ENCODE measurements at regions of chr20 and their contacts with region 1.

Region 1: GRCh38 chr20:35092524-35093266 is at the start of gene TRPC4AP:
- DNase-seq: peak; percentile 78 to 87
- ATAC-seq: peak; percentile 91 to 92
- H3K4me3 ChIP-seq: peak within 1 kb of the TSS; percentile 71 to 95 (median 80)
- H3K27ac ChIP-seq: peak within 1 kb of the TSS; percentile 87 to 99 (median 94)
- H3K4me1 ChIP-seq: peaks cover 36 to 41% of the 10 kb centered on the region in 2 donors
- H3K27me3 ChIP-seq: no peaks in the 10 kb centered on the region
- CTCF ChIP-seq: peak; percentile 94 to 99 (median 99)
- POLR2A ChIP-seq: peak; percentile 86 to 91
- total RNA-seq, gene TRPC4AP: 58.4 to 67.4 (median 63.5) TPM

Region 2: DNA sequence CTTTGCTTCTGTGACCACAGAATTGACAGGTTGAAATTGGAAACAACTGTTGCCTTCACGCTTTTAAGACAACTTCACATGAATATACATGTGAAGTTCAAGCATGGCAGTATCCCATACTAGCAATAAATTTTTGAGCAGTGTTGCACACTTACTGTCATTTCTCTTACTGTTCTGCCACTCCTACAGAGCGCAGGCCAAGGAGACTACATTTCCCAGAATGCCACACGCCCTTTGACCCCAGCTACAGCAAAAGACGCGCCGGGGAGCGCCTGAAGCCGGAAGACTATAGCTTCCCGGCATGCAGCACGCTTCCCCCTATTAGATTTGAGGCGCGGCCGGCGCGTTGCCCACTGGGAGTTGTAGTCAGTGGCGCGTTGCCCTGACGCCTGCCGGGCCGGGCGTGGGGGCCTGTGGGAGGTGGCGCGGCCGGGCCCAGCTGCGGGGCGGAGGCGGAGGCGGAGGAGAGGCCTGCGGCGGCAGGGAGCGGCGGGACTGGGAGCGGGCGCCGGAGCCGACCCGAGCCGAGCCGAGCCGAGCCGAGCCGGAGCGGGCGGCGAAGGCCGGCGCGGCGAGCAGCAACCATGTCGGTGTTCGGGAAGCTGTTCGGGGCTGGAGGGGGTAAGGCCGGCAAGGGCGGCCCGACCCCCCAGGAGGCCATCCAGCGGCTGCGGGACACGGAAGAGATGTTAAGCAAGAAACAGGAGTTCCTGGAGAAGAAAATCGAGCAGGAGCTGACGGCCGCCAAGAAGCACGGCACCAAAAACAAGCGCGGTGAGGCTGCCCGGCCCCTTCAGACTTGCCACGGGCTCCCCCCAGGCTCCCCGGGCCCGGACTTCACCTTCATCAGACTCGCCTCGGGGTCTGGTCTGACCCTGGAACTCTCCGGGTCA is 1281.6 kb before region 1 on chr20 and contains the start of gene CHMP4B:
- in situ Hi-C with region 1: no loop called
- intact Hi-C with region 1: loop called (anchors 10 kb)
- DNase-seq: peak; percentile 99
- ATAC-seq: peak; percentile 90 to 92
- H3K4me3 ChIP-seq: peak within 1 kb of the TSS; percentile 85 to 98 (median 96)
- H3K27ac ChIP-seq: peak within 1 kb of the TSS; percentile 86 to 100 (median 98)
- H3K4me1 ChIP-seq: peaks cover 33 to 34% of the 10 kb centered on the region in 2 donors
- H3K27me3 ChIP-seq: no peaks in the 10 kb centered on the region
- CTCF ChIP-seq: peak in 1 of 5 experiments; percentile 18
- POLR2A ChIP-seq: peak; percentile 98
- total RNA-seq, gene CHMP4B: 57.4 to 109 (median 82.7) TPM

Region 3: DNA sequence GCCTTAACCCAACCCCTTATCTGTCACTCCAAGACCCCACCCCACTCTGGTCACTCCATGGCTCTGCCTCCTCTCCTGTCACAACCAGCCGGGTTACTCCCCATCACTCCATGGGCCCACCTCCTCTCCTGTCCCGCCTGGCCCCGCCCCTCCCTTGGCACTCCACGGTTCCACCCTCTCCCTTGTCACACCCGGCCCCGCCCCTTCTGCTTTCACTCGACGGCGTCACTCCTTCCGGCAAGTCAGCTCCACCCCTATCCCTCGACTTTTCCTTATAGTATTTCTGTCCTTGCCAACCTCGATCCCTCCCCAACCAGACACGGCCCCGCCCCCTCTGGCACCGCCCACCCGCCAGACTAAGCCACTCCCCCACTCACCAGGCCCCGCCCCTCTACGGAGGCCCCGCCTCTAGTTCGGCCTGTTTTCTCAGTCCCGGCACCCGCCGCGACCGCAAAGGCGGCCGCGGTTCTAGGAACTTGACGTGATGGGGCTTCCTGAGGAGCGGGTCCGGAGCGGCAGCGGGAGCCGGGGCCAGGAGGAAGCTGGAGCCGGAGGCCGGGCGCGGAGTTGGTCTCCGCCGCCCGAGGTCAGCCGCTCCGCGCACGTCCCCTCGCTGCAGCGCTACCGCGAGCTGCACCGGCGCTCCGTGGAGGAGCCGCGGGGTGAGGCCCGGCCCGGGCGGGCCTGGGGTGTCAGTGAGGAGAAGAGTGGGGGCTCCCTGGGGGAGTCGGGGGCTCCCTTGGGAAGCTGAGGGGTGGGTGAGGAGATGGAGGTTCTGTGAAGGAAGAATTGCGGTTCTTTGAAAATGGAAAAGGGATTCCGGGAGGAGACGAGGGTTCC is 216.3 kb before region 1 on chr20 and contains the start of gene ACSS2:
- in situ Hi-C with region 1: loop called (anchors 5 to 25 kb)
- intact Hi-C with region 1: loop called (anchors 1 kb)
- DNase-seq: peak; percentile 98 to 99
- ATAC-seq: peak; percentile 77 to 83
- H3K4me3 ChIP-seq: peak within 1 kb of the TSS; percentile 73 to 92 (median 83)
- H3K27ac ChIP-seq: peak within 1 kb of the TSS; percentile 87 to 97 (median 96)
- H3K4me1 ChIP-seq: peaks cover 44 to 54% of the 10 kb centered on the region in 2 donors
- H3K27me3 ChIP-seq: no peaks in the 10 kb centered on the region
- CTCF ChIP-seq: peak in 1 of 5 experiments; percentile 14
- POLR2A ChIP-seq: peak; percentile 90 to 94
- total RNA-seq, gene ACSS2: 70.5 to 94.7 (median 88.1) TPM

Region 4: GRCh38 chr20:35021063-35021462 is 71.6 kb before region 1 on chr20:
- in situ Hi-C with region 1: no loop called
- intact Hi-C with region 1: loop called (anchors 2 kb)
- DNase-seq: peak; percentile 62 to 96
- ATAC-seq: peak; percentile 64 to 67
- H3K4me3 ChIP-seq: no peak overlapping the region
- H3K27ac ChIP-seq: peak overlapping the region; percentile 85 to 95 (median 90)
- H3K4me1 ChIP-seq: peaks cover 49 to 56% of the 10 kb centered on the region in 2 donors
- H3K27me3 ChIP-seq: no peaks in the 10 kb centered on the region
- CTCF ChIP-seq: no peak
- POLR2A ChIP-seq: peak; percentile 18 to 29

Region 5: GRCh38 chr20:35207950-35208611 is 115.4 kb after region 1 on chr20:
- in situ Hi-C with region 1: loop called in 3 of 4 experiments (anchors 5 to 10 kb)
- intact Hi-C with region 1: loop called (anchors 2 kb)
- DNase-seq: peak; percentile 53 to 67
- ATAC-seq: peak; percentile 90 to 95
- H3K4me3 ChIP-seq: peak overlapping the region in 3 of 4 donors; percentile 1 to 37 (median 23)
- H3K27ac ChIP-seq: peak overlapping the region; percentile 55 to 77 (median 60)
- H3K4me1 ChIP-seq: no peaks in the 10 kb centered on the region
- H3K27me3 ChIP-seq: no peaks in the 10 kb centered on the region
- CTCF ChIP-seq: peak; percentile 77 to 85 (median 81)
- POLR2A ChIP-seq: no peak

Region 6: GRCh38 chr20:35329435-35330139 is 236.9 kb after region 1 on chr20:
- in situ Hi-C with region 1: no loop called
- intact Hi-C with region 1: no loop called
- DNase-seq: peak in 1 of 2 donors; percentile 44
- ATAC-seq: peak in 1 of 2 donors; percentile 61
- H3K4me3 ChIP-seq: no peak overlapping the region
- H3K27ac ChIP-seq: no peak overlapping the region
- H3K4me1 ChIP-seq: peaks cover 8 to 25% of the 10 kb centered on the region in 2 donors
- H3K27me3 ChIP-seq: no peaks in the 10 kb centered on the region
- CTCF ChIP-seq: peak; percentile 40 to 57 (median 45)
- POLR2A ChIP-seq: no peak